ENCODE measurements at regions of chr1 and their contacts with region 1.

Region 1: DNA sequence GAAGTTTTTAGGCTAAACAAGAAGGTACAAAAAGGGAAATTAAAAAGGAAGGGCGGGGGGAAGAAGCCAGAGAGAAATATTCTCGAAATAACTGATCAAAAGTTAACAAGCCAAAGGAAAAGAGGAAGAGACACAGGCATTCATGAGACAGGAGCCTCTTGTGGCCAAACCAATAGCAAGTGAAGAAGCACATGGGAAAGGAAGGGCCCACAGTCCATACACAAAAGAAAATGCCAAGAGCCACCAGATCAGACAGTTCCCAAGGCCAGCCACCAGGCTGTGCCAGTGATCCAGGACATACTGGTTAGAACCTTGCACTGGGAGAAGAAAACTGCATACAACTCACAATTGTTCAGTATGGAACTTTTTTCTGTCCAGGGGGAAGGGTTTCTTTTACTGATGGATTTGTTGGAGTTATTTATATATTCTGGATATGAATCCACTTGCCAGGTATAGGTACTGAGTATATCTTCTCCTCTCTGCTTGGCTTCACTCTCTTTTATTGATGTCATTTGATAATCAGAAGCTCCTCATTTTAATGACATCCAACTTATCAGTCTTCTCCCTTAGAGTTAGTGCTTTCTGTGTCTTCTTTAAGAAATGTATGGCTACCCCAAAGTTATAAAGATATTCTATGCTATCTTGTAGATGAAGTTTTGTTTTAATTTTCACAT is 76.8 kb downstream of the CD46 start:
- DNase-seq: peak; percentile 81
- ATAC-seq: peak; percentile 37
- H3K4me3 ChIP-seq: no peak overlapping the region
- H3K27ac ChIP-seq: peak overlapping the region; percentile 10
- H3K4me1 ChIP-seq: peaks cover 64% of the 10 kb centered on the region
- H3K27me3 ChIP-seq: no peaks in the 10 kb centered on the region
- CTCF ChIP-seq: peak; percentile 83 to 95 (median 93)
- EP300 ChIP-seq: no peak
- POLR2A ChIP-seq: no peak
- RAD21 ChIP-seq: peak; percentile 96

Region 2: DNA sequence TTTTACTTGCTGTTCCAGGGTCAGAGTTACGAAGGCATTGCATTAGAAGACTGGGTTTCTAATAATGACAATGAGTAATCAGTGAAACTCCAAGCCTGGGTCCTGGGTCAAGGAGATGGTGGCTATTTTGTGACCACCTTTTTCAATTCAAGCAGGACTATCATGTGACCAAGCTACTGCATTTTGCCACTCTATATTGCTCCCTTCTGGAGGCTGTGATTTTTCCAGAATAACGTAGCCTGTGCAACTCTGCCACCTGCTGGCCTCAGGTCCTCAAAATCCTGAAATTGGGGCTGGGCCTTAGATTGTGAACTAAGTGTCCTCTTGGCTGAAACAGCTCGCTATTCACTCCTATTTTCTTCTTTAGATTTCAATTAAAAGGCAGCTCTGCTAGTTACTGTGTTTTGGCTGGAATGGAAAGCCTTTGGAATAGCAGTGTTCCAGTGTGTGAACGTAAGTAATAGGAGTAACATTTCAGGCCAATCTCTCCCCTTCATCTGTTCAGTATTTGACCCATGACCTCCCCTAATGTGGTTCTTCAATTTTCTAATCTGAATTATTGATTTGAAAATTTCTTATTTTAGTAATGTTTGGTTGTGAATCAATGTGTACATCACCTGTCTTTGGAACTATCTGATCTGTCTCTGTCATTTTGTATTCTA is 129.7 kb before region 1 on chr1:
- CTCF ChIA-PET with region 1: no interaction called
- POLR2A ChIA-PET with region 1: no interaction called
- RAD21 ChIA-PET with region 1: no interaction called
- SMC1A ChIA-PET with region 1: no interaction called
- in situ Hi-C with region 1: no loop called
- intact Hi-C with region 1: no loop called
- DNase-seq: no peak
- ATAC-seq: peak; percentile 80
- H3K4me3 ChIP-seq: no peak overlapping the region
- H3K27ac ChIP-seq: no peak overlapping the region
- H3K4me1 ChIP-seq: no peaks in the 10 kb centered on the region
- H3K27me3 ChIP-seq: no peaks in the 10 kb centered on the region
- CTCF ChIP-seq: peak; percentile 53 to 62 (median 55)
- EP300 ChIP-seq: no peak
- POLR2A ChIP-seq: no peak
- RAD21 ChIP-seq: peak; percentile 61

Region 3: DNA sequence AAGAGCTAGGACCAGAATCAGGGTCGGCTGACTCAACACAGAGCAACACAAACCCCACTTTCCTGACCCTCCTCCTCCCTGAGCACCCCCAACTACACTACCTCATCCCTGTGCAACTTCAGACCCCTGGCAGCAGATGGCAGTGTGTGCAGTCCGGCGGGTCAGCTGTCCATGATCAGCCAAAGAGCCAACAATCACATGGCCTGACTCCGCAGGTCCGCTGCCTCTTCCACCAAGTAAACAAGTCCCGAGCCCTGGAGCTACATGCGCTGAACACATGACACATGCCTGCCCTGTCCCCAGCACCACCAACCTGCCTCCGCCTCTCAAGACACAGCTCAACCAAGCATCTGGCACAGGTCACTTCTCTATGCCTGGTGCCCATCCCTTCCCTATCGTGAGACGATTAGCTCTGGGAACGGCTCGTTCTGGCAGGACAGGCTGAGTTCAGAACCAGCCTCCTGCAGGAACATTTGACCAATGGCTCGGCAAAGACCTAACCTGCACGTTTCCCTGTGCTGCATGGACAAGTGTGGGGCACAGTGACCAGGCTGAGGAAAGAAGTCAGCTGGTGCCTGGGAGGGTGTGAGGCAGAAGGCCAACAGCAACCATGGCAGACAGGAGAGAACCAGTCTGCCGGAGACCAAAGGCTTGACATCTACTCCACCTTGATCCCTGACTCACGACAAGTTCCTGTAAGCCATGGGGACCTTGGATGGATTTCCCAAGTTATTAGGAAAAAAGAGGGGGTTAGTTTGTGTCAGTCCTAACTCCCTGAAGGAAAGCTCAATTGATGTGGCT is 16.5 kb before region 1 on chr1:
- CTCF ChIA-PET with region 1: interaction called, 18 read pairs
- POLR2A ChIA-PET with region 1: interaction called, 15 read pairs
- RAD21 ChIA-PET with region 1: interaction called, 4 read pairs
- SMC1A ChIA-PET with region 1: interaction called, 16 read pairs
- in situ Hi-C with region 1: no loop called
- intact Hi-C with region 1: no loop called
- DNase-seq: no peak
- ATAC-seq: peak; percentile 53
- H3K4me3 ChIP-seq: no peak overlapping the region
- H3K27ac ChIP-seq: no peak overlapping the region
- H3K4me1 ChIP-seq: peaks cover 26% of the 10 kb centered on the region
- H3K27me3 ChIP-seq: no peaks in the 10 kb centered on the region
- CTCF ChIP-seq: peak; percentile 50 to 60 (median 56)
- EP300 ChIP-seq: no peak
- POLR2A ChIP-seq: peak; percentile 37; the same call in 1 of the 2 replicates
- RAD21 ChIP-seq: peak; percentile 55

Region 4: GRCh38 chr1:207868774-207869721 is 40.4 kb after region 1 on chr1:
- CTCF ChIA-PET with region 1: interaction called, 821 read pairs
- POLR2A ChIA-PET with region 1: interaction called, 620 read pairs
- RAD21 ChIA-PET with region 1: interaction called, 265 read pairs
- SMC1A ChIA-PET with region 1: interaction called, 444 read pairs
- in situ Hi-C with region 1: loop called (anchors 5 kb)
- intact Hi-C with region 1: loop called (anchors 1 kb)
- DNase-seq: no peak
- ATAC-seq: peak; percentile 82
- H3K4me3 ChIP-seq: peak overlapping the region; percentile 97
- H3K27ac ChIP-seq: peak overlapping the region; percentile 77
- H3K4me1 ChIP-seq: peaks cover 55% of the 10 kb centered on the region
- H3K27me3 ChIP-seq: no peaks in the 10 kb centered on the region
- CTCF ChIP-seq: peak; percentile 70 to 83 (median 81)
- EP300 ChIP-seq: no peak; a peak in 1 of 4 replicates
- POLR2A ChIP-seq: peak; percentile 64; the same call in 1 of the 2 replicates
- RAD21 ChIP-seq: peak; percentile 62

Region 5: GRCh38 chr1:207897188-207897587 is 68.6 kb after region 1 on chr1:
- CTCF ChIA-PET with region 1: interaction called, 14 read pairs
- POLR2A ChIA-PET with region 1: no interaction called
- RAD21 ChIA-PET with region 1: interaction called, 3 read pairs
- SMC1A ChIA-PET with region 1: interaction called, 21 read pairs
- in situ Hi-C with region 1: no loop called
- intact Hi-C with region 1: no loop called
- DNase-seq: no peak
- ATAC-seq: peak; percentile 43
- H3K4me3 ChIP-seq: no peak overlapping the region
- H3K27ac ChIP-seq: no peak overlapping the region
- H3K4me1 ChIP-seq: no peaks in the 10 kb centered on the region; the same call in 1 of the 2 replicates
- H3K27me3 ChIP-seq: peaks cover 0 to 2% of the 10 kb centered on the region in 2 experiments; a peak in 1 of 4 replicates
- CTCF ChIP-seq: peak in 2 of 3 experiments; percentile 29 to 39; a peak in 4 of 6 replicates
- EP300 ChIP-seq: no peak
- POLR2A ChIP-seq: no peak
- RAD21 ChIP-seq: peak; percentile 53

Region 6: DNA sequence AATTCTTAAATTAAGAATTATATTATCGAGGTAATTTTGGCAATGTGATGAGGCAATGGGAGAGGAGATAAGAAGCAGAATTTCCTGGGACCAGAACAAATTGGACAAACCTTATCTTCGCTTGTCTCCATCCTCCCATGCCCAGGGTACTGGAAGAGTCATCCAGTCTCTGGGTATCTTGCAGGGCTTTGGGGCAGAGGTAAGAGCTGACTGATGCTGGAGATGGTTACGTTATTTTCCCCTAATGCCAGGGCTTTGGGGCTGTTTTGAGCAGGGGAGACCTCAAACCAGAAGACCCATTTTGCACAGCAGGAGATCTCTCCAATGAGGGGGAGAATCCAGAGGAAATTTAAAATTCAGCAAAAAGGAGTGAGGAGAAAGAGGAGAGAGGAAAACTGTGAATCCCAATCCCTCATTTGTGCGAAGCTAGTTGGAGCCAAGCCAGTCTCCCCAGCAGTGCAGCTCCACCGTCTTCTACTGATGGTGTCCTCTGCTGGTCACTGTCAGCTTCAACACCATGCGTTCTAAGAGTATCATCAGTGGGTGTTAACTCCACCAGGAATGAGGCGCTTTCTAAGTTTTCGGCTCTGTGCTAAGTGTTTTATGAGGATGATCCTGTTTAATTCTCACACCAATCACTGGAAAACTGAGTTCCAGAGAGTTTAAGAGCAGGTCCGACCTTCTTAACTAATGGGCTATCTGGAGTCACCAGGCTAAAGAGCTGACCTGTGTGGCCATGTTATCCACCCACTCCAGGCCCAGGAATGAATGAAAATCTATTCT is 169.1 kb after region 1 on chr1:
- CTCF ChIA-PET with region 1: interaction called, 10 read pairs
- POLR2A ChIA-PET with region 1: no interaction called
- RAD21 ChIA-PET with region 1: no interaction called
- SMC1A ChIA-PET with region 1: interaction called, 3 read pairs
- in situ Hi-C with region 1: no loop called
- intact Hi-C with region 1: no loop called
- DNase-seq: no peak
- ATAC-seq: peak; percentile 99
- H3K4me3 ChIP-seq: no peak overlapping the region
- H3K27ac ChIP-seq: no peak overlapping the region
- H3K4me1 ChIP-seq: no peaks in the 10 kb centered on the region
- H3K27me3 ChIP-seq: peaks cover 2 to 3% of the 10 kb centered on the region in 2 experiments; a peak in 2 of 4 replicates
- CTCF ChIP-seq: peak; percentile 63 to 89 (median 82)
- EP300 ChIP-seq: no peak
- POLR2A ChIP-seq: no peak
- RAD21 ChIP-seq: peak; percentile 26